ENCODE measurements at regions of chr11 and their contacts with region 1.

Region 1: GRCh38 chr11:27362749-27363575 is at the start of gene CCDC34:
- DNase-seq: peak; percentile 88 to 93
- ATAC-seq: peak; percentile 99 to 100 (median 100)
- H3K4me3 ChIP-seq: peak within 1 kb of the TSS; percentile 51 to 93 (median 75)
- H3K27ac ChIP-seq: peak within 1 kb of the TSS in 7 of 10 donors; percentile 3 to 76 (median 34)
- H3K4me1 ChIP-seq: peaks cover 0 to 24% (median 12%) of the 10 kb centered on the region in 9 donors
- H3K27me3 ChIP-seq: no peaks in the 10 kb centered on the region
- CTCF ChIP-seq: peak in 1 of 9 donors; percentile 20
- total RNA-seq, gene CCDC34: 1.1 to 10.7 (median 3.3) TPM

Region 2: GRCh38 chr11:27196203-27196897 is 166.6 kb before region 1 on chr11:
- intact Hi-C with region 1: loop called in 1 of 10 experiments (anchors 10 kb)
- DNase-seq: no peak
- ATAC-seq: no peak
- H3K4me3 ChIP-seq: no peak overlapping the region
- H3K27ac ChIP-seq: no peak overlapping the region
- H3K4me1 ChIP-seq: peaks cover 0 to 6% (median 2%) of the 10 kb centered on the region in 9 donors
- H3K27me3 ChIP-seq: peaks cover 0 to 4% (median 0%) of the 10 kb centered on the region in 7 donors
- CTCF ChIP-seq: no peak

Region 3: DNA sequence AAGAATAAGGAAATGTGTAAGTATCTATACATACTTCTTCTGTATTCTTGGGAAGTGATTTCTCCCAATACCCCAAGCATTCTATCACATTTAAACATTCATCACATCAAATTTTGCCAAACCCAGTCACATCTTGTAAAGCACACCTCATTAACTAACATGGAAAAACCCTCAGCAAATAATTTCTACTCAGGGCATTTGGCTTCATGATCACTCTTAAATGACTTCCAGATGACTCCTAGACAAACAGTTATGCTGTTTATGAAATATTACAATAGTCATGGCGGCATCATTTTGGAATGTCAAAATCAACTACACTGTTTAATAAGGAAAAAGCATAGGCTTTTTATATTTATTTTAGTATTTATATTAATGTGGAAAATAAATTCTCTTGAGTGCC is 47.3 kb after region 1 on chr11:
- intact Hi-C with region 1: loop called in 1 of 10 experiments (anchors 1 kb)
- DNase-seq: no peak
- ATAC-seq: no peak
- H3K4me3 ChIP-seq: no peak overlapping the region
- H3K27ac ChIP-seq: no peak overlapping the region
- H3K4me1 ChIP-seq: peaks cover 0 to 40% (median 10%) of the 10 kb centered on the region in 9 donors
- H3K27me3 ChIP-seq: no peaks in the 10 kb centered on the region
- CTCF ChIP-seq: no peak

Measured in heart right ventricle (tissue), 16 donors.